Breast epithelium (tissue), 4 donors: ENCODE measurements at regions of chrX and their contacts with region 1.

Region 1: GRCh38 chrX:131366407-131366806 is 77.3 kb upstream of the IGSF1 start:
- DNase-seq: no peak
- H3K4me3 ChIP-seq: no peak overlapping the region
- H3K27ac ChIP-seq: no peak overlapping the region
- H3K4me1 ChIP-seq: no peaks in the 10 kb centered on the region
- H3K27me3 ChIP-seq: peaks cover 0 to 47% of the 10 kb centered on the region in 2 donors
- CTCF ChIP-seq: no peak
- POLR2A ChIP-seq: no peak

Region 2: DNA sequence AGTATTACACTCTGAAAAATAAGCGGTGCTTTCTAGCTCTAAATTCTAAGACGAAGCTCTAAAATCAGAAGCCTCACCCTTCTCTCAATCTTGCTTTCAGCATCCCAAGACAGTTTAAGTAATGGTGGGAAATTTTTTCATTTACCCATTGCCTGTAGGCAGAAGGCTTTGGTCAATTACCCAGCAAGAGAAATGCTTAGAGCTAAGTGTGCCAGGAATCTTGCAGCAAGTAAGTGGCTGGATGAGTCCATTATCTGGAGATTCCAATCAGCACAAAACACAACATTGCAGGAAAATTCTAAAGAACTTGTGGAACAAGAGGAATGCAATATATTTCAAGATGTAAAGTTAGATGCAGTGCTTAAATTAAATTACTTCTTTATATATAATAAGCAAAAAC is 1702.1 kb after region 1 on chrX:
- intact Hi-C with region 1: loop called (anchors 10 kb)
- DNase-seq: no peak
- H3K4me3 ChIP-seq: no peak overlapping the region
- H3K27ac ChIP-seq: no peak overlapping the region
- H3K4me1 ChIP-seq: no peaks in the 10 kb centered on the region
- H3K27me3 ChIP-seq: peaks cover 0 to 8% of the 10 kb centered on the region in 2 donors
- CTCF ChIP-seq: no peak
- POLR2A ChIP-seq: no peak